ENCODE measurements at regions of chr15 and their contacts with region 1.

Region 1: GRCh38 chr15:90320061-90320884 is 31.8 kb upstream of the ZNF774 start:
- DNase-seq: peak; percentile 64 to 71 (median 68)
- H3K4me3 ChIP-seq: no peak overlapping the region
- H3K4me3 Mint-ChIP-seq: peak overlapping the region in 2 of 8 donors; percentile 53 to 56
- H3K27ac ChIP-seq: no peak overlapping the region
- H3K27ac Mint-ChIP-seq: peak overlapping the region in 2 of 7 donors; percentile 53 to 73
- H3K4me1 ChIP-seq: peaks cover 7% of the 10 kb centered on the region
- H3K4me1 Mint-ChIP-seq: peaks cover 5 to 8% (median 7%) of the 10 kb centered on the region in 4 donors
- H3K27me3 ChIP-seq: no peaks in the 10 kb centered on the region
- H3K27me3 Mint-ChIP-seq: peaks cover 0 to 3% of the 10 kb centered on the region in 2 donors

Region 2: DNA sequence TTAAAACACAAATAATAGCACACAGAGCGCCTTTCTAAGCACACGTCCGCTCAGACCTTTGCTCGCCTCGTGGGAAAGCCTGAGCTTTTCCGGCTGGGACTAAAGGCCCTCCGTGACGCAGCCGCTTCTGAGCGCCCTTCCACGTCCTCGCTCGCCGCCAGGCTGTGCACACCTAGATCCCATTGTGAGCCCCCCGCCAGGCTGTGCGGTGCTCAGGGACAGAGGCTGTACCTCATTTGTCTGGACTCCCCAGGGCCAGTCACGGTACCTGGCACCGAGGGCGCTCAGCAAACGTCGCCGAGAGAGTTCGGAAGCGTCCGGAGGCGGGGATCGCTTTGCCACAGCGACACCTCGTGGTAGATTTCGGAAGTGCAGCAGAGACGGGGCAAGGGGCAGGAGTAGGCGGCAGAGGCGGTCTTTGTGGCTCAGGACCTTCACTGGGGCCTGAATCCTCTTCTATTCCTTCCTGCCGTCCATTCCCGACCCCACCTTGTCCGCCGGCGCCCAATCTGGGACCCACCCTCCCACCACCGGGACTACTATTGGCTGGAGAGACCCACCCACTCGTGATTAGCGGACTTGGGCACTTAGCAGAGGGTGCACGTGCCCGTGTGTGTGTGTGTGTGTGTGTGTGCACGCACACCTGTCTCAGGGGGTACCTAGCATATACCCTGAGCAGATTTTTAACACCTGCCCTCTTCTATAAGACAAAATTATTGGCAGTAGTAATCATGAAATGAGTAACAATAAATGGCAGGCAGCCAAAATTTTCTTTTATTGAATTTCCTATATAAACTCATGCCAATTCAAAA is 889.5 kb before region 1 on chr15:
- CTCF ChIA-PET with region 1: no interaction called
- POLR2A ChIA-PET with region 1: no interaction called
- intact Hi-C with region 1: no loop called
- DNase-seq: peak; percentile 73 to 84 (median 77)
- H3K4me3 ChIP-seq: peak overlapping the region; percentile 31 to 51
- H3K4me3 Mint-ChIP-seq: peak overlapping the region; percentile 74 to 89 (median 82)
- H3K27ac ChIP-seq: no peak overlapping the region
- H3K27ac Mint-ChIP-seq: peak overlapping the region in 1 of 7 donors; percentile 53
- H3K4me1 ChIP-seq: peaks cover 5% of the 10 kb centered on the region
- H3K4me1 Mint-ChIP-seq: peaks cover 4 to 7% (median 6%) of the 10 kb centered on the region in 4 donors
- H3K27me3 ChIP-seq: no peaks in the 10 kb centered on the region
- H3K27me3 Mint-ChIP-seq: peaks cover 6 to 23% of the 10 kb centered on the region in 2 donors

Region 3: GRCh38 chr15:90201130-90201949 is 118.9 kb before region 1 on chr15 and contains the start of gene SEMA4B:
- CTCF ChIA-PET with region 1: no interaction called
- POLR2A ChIA-PET with region 1: no interaction called
- intact Hi-C with region 1: no loop called
- DNase-seq: peak; percentile 70 to 78 (median 73)
- H3K4me3 ChIP-seq: peak within 1 kb of the TSS; percentile 17 to 79
- H3K4me3 Mint-ChIP-seq: peak within 1 kb of the TSS; percentile 81 to 91 (median 90)
- H3K27ac ChIP-seq: peak within 1 kb of the TSS; percentile 74
- H3K27ac Mint-ChIP-seq: peak within 1 kb of the TSS; percentile 41 to 91 (median 80)
- H3K4me1 ChIP-seq: peaks cover 24% of the 10 kb centered on the region
- H3K4me1 Mint-ChIP-seq: peaks cover 14 to 35% (median 25%) of the 10 kb centered on the region in 4 donors
- H3K27me3 ChIP-seq: no peaks in the 10 kb centered on the region
- H3K27me3 Mint-ChIP-seq: no peaks in the 10 kb centered on the region
- total RNA-seq, gene SEMA4B: 18.9 to 23.0 TPM

Region 4: DNA sequence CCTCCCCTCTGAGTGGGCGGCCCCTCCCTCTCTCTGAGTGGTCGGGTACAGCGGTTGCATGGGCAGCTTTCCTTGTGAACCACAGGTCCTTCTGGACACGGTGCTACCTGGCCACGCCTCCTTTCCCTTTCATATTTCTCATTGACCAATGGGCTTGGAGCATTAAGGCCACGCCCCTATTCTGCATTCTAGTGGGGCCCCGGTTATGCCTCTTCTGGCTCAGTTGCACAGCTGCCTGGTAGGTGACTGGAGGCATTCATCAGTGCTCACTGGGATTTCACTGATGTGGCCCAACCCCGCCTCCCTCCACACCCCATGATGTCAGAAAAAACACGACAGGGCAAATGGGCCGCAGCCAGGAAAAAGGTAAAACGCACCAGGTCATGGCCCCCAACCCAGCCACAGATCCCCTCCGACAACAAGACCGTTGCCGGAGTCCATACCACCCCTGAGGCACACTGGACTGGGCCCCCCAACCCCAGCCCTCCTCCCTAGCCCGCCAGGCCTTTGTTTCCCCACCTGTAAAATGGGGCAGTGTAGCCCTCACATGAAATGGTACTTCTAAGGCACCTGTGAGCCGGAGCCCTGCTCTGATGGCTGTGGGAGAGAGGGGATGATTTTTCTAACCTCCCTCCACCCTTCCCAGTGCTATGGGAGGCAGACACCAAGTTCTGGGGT is 28.5 kb before region 1 on chr15:
- CTCF ChIA-PET with region 1: interaction called, 21 read pairs
- POLR2A ChIA-PET with region 1: no interaction called
- intact Hi-C with region 1: no loop called
- DNase-seq: no peak
- H3K4me3 ChIP-seq: no peak overlapping the region
- H3K4me3 Mint-ChIP-seq: no peak overlapping the region
- H3K27ac ChIP-seq: no peak overlapping the region
- H3K27ac Mint-ChIP-seq: peak overlapping the region in 1 of 7 donors; percentile 22
- H3K4me1 ChIP-seq: peaks cover 4% of the 10 kb centered on the region
- H3K4me1 Mint-ChIP-seq: peaks cover 3 to 7% (median 6%) of the 10 kb centered on the region in 4 donors
- H3K27me3 ChIP-seq: no peaks in the 10 kb centered on the region
- H3K27me3 Mint-ChIP-seq: no peaks in the 10 kb centered on the region

Region 5: DNA sequence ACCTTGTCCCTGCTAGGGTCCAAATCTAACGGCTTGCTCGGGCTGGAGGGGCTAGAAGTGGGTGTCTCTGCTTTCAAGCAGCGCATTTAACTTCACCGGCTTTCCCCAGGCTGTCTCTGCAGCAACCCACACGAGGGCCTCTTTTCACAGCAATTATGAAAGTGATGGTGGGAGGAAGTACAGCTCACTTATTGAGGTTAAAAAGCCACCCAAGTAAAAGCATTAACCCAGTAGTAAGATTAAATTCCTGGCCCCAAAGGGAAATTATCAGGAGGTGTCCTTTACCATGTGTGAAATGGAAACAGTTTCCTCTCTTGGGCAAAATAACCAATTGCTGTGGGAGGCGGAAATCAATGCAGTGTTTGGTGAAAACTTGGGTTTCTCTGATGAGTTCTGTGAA is 13.7 kb before region 1 on chr15:
- CTCF ChIA-PET with region 1: interaction called, 41 read pairs
- POLR2A ChIA-PET with region 1: interaction called, 3 read pairs
- intact Hi-C with region 1: no loop called
- DNase-seq: peak in 4 of 5 donors; percentile 12 to 29 (median 16)
- H3K4me3 ChIP-seq: no peak overlapping the region
- H3K4me3 Mint-ChIP-seq: peak overlapping the region; percentile 39 to 83 (median 68)
- H3K27ac ChIP-seq: no peak overlapping the region
- H3K27ac Mint-ChIP-seq: peak overlapping the region; percentile 57 to 95 (median 87)
- H3K4me1 ChIP-seq: peaks cover 18% of the 10 kb centered on the region
- H3K4me1 Mint-ChIP-seq: peaks cover 15 to 28% (median 20%) of the 10 kb centered on the region in 4 donors
- H3K27me3 ChIP-seq: no peaks in the 10 kb centered on the region
- H3K27me3 Mint-ChIP-seq: no peaks in the 10 kb centered on the region

Region 6: GRCh38 chr15:90419738-90420406 is 99.6 kb after region 1 on chr15:
- CTCF ChIA-PET with region 1: interaction called, 10 read pairs
- POLR2A ChIA-PET with region 1: no interaction called
- intact Hi-C with region 1: no loop called
- DNase-seq: no peak
- H3K4me3 ChIP-seq: no peak overlapping the region
- H3K4me3 Mint-ChIP-seq: peak overlapping the region in 6 of 8 donors; percentile 1 to 64 (median 60)
- H3K27ac ChIP-seq: no peak overlapping the region
- H3K27ac Mint-ChIP-seq: peak overlapping the region in 6 of 7 donors; percentile 49 to 79 (median 70)
- H3K4me1 ChIP-seq: peaks cover 60% of the 10 kb centered on the region
- H3K4me1 Mint-ChIP-seq: peaks cover 44 to 83% (median 62%) of the 10 kb centered on the region in 4 donors
- H3K27me3 ChIP-seq: no peaks in the 10 kb centered on the region
- H3K27me3 Mint-ChIP-seq: no peaks in the 10 kb centered on the region

Region 7: GRCh38 chr15:90482124-90483011 is 162.1 kb after region 1 on chr15:
- CTCF ChIA-PET with region 1: interaction called, 170 read pairs
- POLR2A ChIA-PET with region 1: interaction called, 8 read pairs
- intact Hi-C with region 1: loop called (anchors 1 kb)
- DNase-seq: peak; percentile 30 to 48 (median 47)
- H3K4me3 ChIP-seq: no peak overlapping the region
- H3K4me3 Mint-ChIP-seq: no peak overlapping the region
- H3K27ac ChIP-seq: no peak overlapping the region
- H3K27ac Mint-ChIP-seq: peak overlapping the region in 3 of 7 donors; percentile 59 to 73 (median 62)
- H3K4me1 ChIP-seq: peaks cover 33% of the 10 kb centered on the region
- H3K4me1 Mint-ChIP-seq: peaks cover 24 to 47% (median 37%) of the 10 kb centered on the region in 4 donors
- H3K27me3 ChIP-seq: no peaks in the 10 kb centered on the region
- H3K27me3 Mint-ChIP-seq: no peaks in the 10 kb centered on the region

Region 8: GRCh38 chr15:90691982-90692773 is 371.9 kb after region 1 on chr15:
- CTCF ChIA-PET with region 1: interaction called, 5 read pairs
- POLR2A ChIA-PET with region 1: no interaction called
- intact Hi-C with region 1: loop called (anchors 1 kb)
- DNase-seq: no peak
- H3K4me3 ChIP-seq: no peak overlapping the region
- H3K4me3 Mint-ChIP-seq: no peak overlapping the region
- H3K27ac ChIP-seq: no peak overlapping the region
- H3K27ac Mint-ChIP-seq: no peak overlapping the region
- H3K4me1 ChIP-seq: no peaks in the 10 kb centered on the region
- H3K4me1 Mint-ChIP-seq: peaks cover 0 to 3% (median under 1%) of the 10 kb centered on the region in 4 donors
- H3K27me3 ChIP-seq: no peaks in the 10 kb centered on the region
- H3K27me3 Mint-ChIP-seq: no peaks in the 10 kb centered on the region